Ascending aorta (tissue), 2 donors: ENCODE measurements at regions of chr3 and their contacts with region 1.

Region 1: DNA sequence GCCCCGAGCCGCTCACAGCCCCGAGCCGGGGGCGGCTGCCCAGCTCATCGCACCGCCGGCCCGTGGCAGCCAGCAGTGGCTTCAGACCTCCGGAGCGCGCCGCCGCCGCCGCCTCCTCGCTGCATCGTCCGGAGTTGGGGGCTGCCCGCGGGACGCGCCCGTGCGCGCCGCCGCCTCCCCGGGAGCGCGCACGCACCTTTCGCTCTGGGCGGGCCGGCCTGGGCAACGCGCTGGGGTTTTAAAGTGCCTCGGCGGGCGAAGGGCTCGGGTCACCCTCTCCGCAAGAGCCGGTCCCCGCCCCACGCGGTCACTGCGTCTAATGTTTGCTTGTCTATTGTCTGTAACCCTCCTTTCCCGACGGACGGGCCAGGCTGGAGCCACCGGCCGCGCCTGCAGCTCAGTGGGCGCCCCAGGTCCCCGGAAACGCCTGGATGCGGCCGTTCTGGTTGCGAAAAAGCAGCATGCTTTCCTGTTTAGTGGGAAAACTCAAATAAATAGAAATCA is at the start of gene RYK:
- DNase-seq: peak; percentile 32 to 88
- H3K4me3 ChIP-seq: peak within 1 kb of the TSS; percentile 85 to 98
- H3K27ac ChIP-seq: peak within 1 kb of the TSS; percentile 87 to 98
- H3K4me1 ChIP-seq: peaks cover 0 to 15% of the 10 kb centered on the region in 2 donors
- H3K27me3 ChIP-seq: no peaks in the 10 kb centered on the region
- CTCF ChIP-seq: no peak
- total RNA-seq, gene RYK: 13.5 TPM

Region 2: GRCh38 chr3:134357261-134358184 is 106.8 kb after region 1 on chr3:
- intact Hi-C with region 1: no loop called
- DNase-seq: no peak
- H3K4me3 ChIP-seq: no peak overlapping the region
- H3K27ac ChIP-seq: peak overlapping the region; percentile 81 to 92
- H3K4me1 ChIP-seq: peaks cover 28 to 81% of the 10 kb centered on the region in 2 donors
- H3K27me3 ChIP-seq: no peaks in the 10 kb centered on the region
- CTCF ChIP-seq: no peak

Region 3: DNA sequence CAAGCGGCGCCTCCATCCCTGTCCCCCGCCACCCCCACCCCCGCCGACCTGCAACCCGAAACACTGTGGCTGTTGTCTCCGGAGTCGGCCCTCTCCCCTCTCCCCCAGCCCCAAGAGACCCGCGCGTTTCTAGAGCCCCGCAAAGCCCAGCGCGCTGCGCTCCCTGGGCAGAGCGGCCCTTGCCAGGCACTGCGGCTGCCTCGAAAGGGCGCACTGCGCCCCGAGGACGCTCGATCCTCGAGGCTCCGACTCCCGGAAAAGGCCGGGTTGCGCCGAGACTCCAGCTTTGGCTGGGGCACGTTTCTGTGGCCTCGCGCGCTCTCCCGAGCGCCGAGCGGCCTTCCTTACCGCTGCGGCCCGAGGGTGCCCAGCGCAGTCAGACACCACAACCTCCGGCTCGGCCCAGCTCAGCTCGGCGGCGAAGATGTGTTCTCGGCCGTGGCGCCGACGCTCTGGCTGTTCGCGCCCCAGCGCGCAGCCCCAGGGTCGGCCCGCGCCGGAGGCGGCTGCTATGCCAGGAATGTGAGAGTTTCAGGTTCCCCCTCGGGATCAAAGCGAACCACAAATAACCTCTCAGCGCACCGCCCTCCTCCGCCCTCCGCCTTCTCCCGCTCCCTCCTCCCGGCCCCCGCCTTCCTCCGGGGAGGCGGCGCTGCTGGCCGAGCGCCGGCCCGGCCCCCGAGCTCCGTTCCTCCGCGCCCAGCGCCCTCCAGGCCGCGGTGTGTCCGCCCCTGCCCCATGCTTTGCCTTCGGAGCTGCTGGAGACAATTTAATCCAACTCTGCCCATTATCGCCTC is 123.4 kb after region 1 on chr3 and contains the start of gene AMOTL2:
- intact Hi-C with region 1: loop called (anchors 5 kb)
- DNase-seq: peak in 1 of 2 donors; percentile 93
- H3K4me3 ChIP-seq: peak within 1 kb of the TSS; percentile 70 to 90
- H3K27ac ChIP-seq: peak within 1 kb of the TSS; percentile 93 to 99
- H3K4me1 ChIP-seq: peaks cover 24 to 36% of the 10 kb centered on the region in 2 donors
- H3K27me3 ChIP-seq: no peaks in the 10 kb centered on the region
- CTCF ChIP-seq: no peak
- total RNA-seq, gene AMOTL2: 156 TPM

Region 4: GRCh38 chr3:134485718-134486576 is 235.2 kb after region 1 on chr3 and contains the starts of genes ANAPC13 and CEP63:
- intact Hi-C with region 1: loop called (anchors 5 kb)
- DNase-seq: peak; percentile 80 to 98
- H3K4me3 ChIP-seq: peak within 1 kb of the TSS; percentile 78 to 92
- H3K27ac ChIP-seq: peak within 1 kb of the TSS; percentile 95 to 98
- H3K4me1 ChIP-seq: peaks cover 26 to 38% of the 10 kb centered on the region in 2 donors
- H3K27me3 ChIP-seq: no peaks in the 10 kb centered on the region
- CTCF ChIP-seq: no peak
- total RNA-seq, gene ANAPC13: 17.0 TPM
- total RNA-seq, gene CEP63: 5.3 TPM